Mammary epithelial cell (primary cell): ENCODE measurements at regions of chr6 and their contacts with region 1.

Region 1: GRCh38 chr6:111721753-111722154 is 116.1 kb upstream of the TRAF3IP2 start:
- DNase-seq: no peak
- H3K4me3 ChIP-seq: no peak overlapping the region
- H3K27ac ChIP-seq: no peak overlapping the region
- H3K4me1 ChIP-seq: peaks cover 6% of the 10 kb centered on the region
- H3K27me3 ChIP-seq: no peaks in the 10 kb centered on the region
- CTCF ChIP-seq: peak; percentile 65 to 72

Region 2: GRCh38 chr6:111850295-111850937 is 128.7 kb after region 1 on chr6:
- CTCF ChIA-PET with region 1: no interaction called
- dilution Hi-C with region 1: no loop called
- in situ Hi-C with region 1: no loop called
- intact Hi-C with region 1: loop called (anchors 5 kb)
- DNase-seq: no peak
- H3K4me3 ChIP-seq: no peak overlapping the region
- H3K27ac ChIP-seq: no peak overlapping the region
- H3K4me1 ChIP-seq: peaks cover 9% of the 10 kb centered on the region
- H3K27me3 ChIP-seq: no peaks in the 10 kb centered on the region
- CTCF ChIP-seq: no peak